Spleen (tissue), 13 donors: ENCODE measurements at regions of chr21 and their contacts with region 1.

Region 1: GRCh38 chr21:41361786-41362604 is at the start of gene MX2:
- DNase-seq: peak; percentile 91
- H3K4me3 ChIP-seq: peak within 1 kb of the TSS; percentile 29 to 82 (median 49)
- H3K27ac ChIP-seq: peak within 1 kb of the TSS; percentile 88 to 99 (median 95)
- H3K4me1 ChIP-seq: peaks cover 33 to 73% (median 56%) of the 10 kb centered on the region in 6 donors
- H3K27me3 ChIP-seq: no peaks in the 10 kb centered on the region
- CTCF ChIP-seq: peak in 2 of 11 experiments; percentile 9 to 27
- POLR2A ChIP-seq: peak in 2 of 3 donors; percentile 41 to 58
- total RNA-seq, gene MX2: 56.5 to 109 (median 75.3) TPM

Region 2: GRCh38 chr21:41277846-41278245 is 84.1 kb before region 1 on chr21:
- intact Hi-C with region 1: no loop called
- DNase-seq: no peak
- H3K4me3 ChIP-seq: no peak overlapping the region
- H3K27ac ChIP-seq: no peak overlapping the region
- H3K4me1 ChIP-seq: no peaks in the 10 kb centered on the region
- H3K27me3 ChIP-seq: no peaks in the 10 kb centered on the region
- CTCF ChIP-seq: no peak
- POLR2A ChIP-seq: no peak

Region 3: GRCh38 chr21:41304068-41304720 is 57.8 kb before region 1 on chr21:
- intact Hi-C with region 1: no loop called
- DNase-seq: no peak
- H3K4me3 ChIP-seq: no peak overlapping the region
- H3K27ac ChIP-seq: no peak overlapping the region
- H3K4me1 ChIP-seq: no peaks in the 10 kb centered on the region
- H3K27me3 ChIP-seq: peaks cover 0 to 17% (median 0%) of the 10 kb centered on the region in 7 donors
- CTCF ChIP-seq: no peak
- POLR2A ChIP-seq: no peak

Region 4: GRCh38 chr21:41419911-41420862 is 58.2 kb after region 1 on chr21:
- intact Hi-C with region 1: loop called (anchors 10 kb)
- DNase-seq: peak; percentile 92
- H3K4me3 ChIP-seq: peak overlapping the region; percentile 49 to 87 (median 56)
- H3K27ac ChIP-seq: peak overlapping the region; percentile 81 to 91 (median 88)
- H3K4me1 ChIP-seq: peaks cover 4 to 62% (median 37%) of the 10 kb centered on the region in 6 donors
- H3K27me3 ChIP-seq: no peaks in the 10 kb centered on the region
- CTCF ChIP-seq: peak in 1 of 11 experiments; percentile 11
- POLR2A ChIP-seq: no peak

Region 5: GRCh38 chr21:41601573-41602368 is 239.8 kb after region 1 on chr21:
- intact Hi-C with region 1: no loop called
- DNase-seq: no peak
- H3K4me3 ChIP-seq: no peak overlapping the region
- H3K27ac ChIP-seq: no peak overlapping the region
- H3K4me1 ChIP-seq: peaks cover 0 to 10% (median 3%) of the 10 kb centered on the region in 6 donors
- H3K27me3 ChIP-seq: peaks cover 0 to 55% (median 0%) of the 10 kb centered on the region in 7 donors
- CTCF ChIP-seq: no peak
- POLR2A ChIP-seq: no peak